K562 (cell line): ENCODE measurements at regions of chr4 and their contacts with region 1.

Region 1: GRCh38 chr4:40238700-40239548 is 42.1 kb downstream of the RHOH start:
- DNase-seq: peak; percentile 92 to 97 (median 95)
- ATAC-seq: peak; percentile 99
- H3K4me3 ChIP-seq: peak overlapping the region; percentile 37
- H3K27ac ChIP-seq: peak overlapping the region; percentile 99
- H3K4me1 ChIP-seq: peaks cover 27 to 48% of the 10 kb centered on the region in 2 experiments
- H3K27me3 ChIP-seq: no peaks in the 10 kb centered on the region
- CTCF ChIP-seq: no peak
- EP300 ChIP-seq: peak; percentile 86
- POLR2A ChIP-seq: peak; percentile 79
- RAD21 ChIP-seq: no peak; a peak in 1 of 4 replicates

Region 2: GRCh38 chr4:39998659-39999345 is 240.1 kb before region 1 on chr4:
- CTCF ChIA-PET with region 1: no interaction called
- POLR2A ChIA-PET with region 1: no interaction called
- in situ Hi-C with region 1: no loop called
- intact Hi-C with region 1: no loop called
- DNase-seq: no peak
- ATAC-seq: no peak
- H3K4me3 ChIP-seq: no peak overlapping the region
- H3K27ac ChIP-seq: no peak overlapping the region
- H3K4me1 ChIP-seq: peaks cover 0 to under 1% of the 10 kb centered on the region in 2 experiments; a peak in 1 of 5 replicates
- H3K27me3 ChIP-seq: no peaks in the 10 kb centered on the region
- CTCF ChIP-seq: no peak
- EP300 ChIP-seq: no peak
- POLR2A ChIP-seq: no peak
- RAD21 ChIP-seq: no peak

Region 3: DNA sequence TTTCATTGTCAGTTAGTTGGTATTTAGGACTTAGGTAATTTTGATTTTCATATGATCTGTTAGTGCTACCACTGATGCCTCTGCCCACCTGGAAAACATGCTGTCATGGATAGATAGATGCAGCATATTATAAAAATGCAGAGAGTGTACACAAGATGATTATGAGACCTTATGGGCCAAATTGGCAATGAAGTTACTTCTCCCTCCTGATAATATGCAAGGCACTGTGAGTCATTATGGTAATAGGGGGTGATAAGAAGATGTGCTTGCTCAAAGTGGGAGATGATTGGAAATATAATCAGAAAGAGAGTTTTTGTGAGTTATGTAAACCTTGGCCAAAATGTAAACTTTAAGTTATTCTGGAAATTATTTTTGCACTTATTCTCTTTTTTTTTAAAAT is 98.7 kb before region 1 on chr4:
- CTCF ChIA-PET with region 1: no interaction called
- POLR2A ChIA-PET with region 1: no interaction called
- in situ Hi-C with region 1: no loop called
- intact Hi-C with region 1: no loop called
- DNase-seq: peak in 2 of 4 experiments; percentile 33 to 41
- ATAC-seq: peak; percentile 59
- H3K4me3 ChIP-seq: no peak overlapping the region
- H3K27ac ChIP-seq: no peak overlapping the region; the same call in 2 of the 3 replicates
- H3K4me1 ChIP-seq: peaks cover 0 to 5% of the 10 kb centered on the region in 2 experiments; a peak in 2 of 5 replicates
- H3K27me3 ChIP-seq: no peaks in the 10 kb centered on the region
- CTCF ChIP-seq: no peak
- EP300 ChIP-seq: no peak; the same call in 1 of the 2 replicates
- POLR2A ChIP-seq: no peak
- RAD21 ChIP-seq: no peak

Region 4: DNA sequence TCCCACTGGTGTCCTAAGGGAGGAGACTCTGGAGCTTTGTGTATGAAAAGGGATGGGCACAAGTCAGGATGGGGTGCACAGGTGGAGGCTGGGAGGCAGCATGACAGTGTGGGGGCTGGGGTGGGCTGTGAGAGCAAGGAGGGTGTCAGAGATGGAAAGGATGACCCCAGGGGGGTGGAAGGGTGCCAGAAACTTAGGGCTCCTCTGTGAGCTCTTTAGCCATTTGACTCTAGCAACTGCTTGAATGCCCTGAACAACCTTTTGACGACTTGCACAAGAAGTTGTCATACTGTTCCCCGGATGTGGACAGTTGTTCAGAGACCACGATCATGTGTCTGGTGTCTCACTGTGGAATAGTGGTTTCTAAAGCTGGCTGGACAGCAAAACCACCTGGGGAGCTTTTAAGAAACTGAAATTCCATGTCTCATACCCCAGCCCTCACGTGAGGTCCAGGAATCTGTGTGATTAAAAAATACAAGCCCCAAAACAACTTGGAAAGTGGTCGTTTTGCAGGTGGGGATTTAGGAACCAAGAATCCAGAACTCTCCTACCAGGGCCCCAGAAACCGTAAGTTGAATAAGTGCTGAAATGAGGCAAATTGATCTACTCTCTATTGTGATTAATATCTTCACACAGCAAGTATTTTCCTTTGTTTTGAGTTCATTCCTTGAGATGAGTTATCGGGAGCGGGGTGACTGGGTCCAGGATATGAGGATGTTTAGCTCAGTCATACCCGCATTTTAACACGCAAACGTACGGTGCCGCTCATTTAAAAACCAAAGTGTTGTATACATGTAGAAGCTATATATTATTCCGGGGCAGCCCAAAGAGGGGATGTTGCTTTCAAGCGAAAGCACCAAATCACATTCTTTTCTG is 38.7 kb before region 1 on chr4:
- CTCF ChIA-PET with region 1: no interaction called
- POLR2A ChIA-PET with region 1: interaction called, 4 read pairs
- in situ Hi-C with region 1: no loop called
- intact Hi-C with region 1: loop called (anchors 2 kb)
- DNase-seq: peak in 1 of 4 experiments; percentile 83
- ATAC-seq: peak; percentile 33
- H3K4me3 ChIP-seq: peak overlapping the region; percentile 50
- H3K27ac ChIP-seq: peak overlapping the region; percentile 85
- H3K4me1 ChIP-seq: peaks cover 34 to 48% of the 10 kb centered on the region in 2 experiments; a peak in 4 of 5 replicates
- H3K27me3 ChIP-seq: no peaks in the 10 kb centered on the region
- CTCF ChIP-seq: no peak
- EP300 ChIP-seq: 0 out of 2 replicates have a peak, but pooled peaks have one; percentile 4
- POLR2A ChIP-seq: no peak; the same call in 1 of the 2 replicates
- RAD21 ChIP-seq: 0 out of 4 replicates have a peak, but pooled peaks of 1 of the 2 experiments have one; percentile 9

Region 5: DNA sequence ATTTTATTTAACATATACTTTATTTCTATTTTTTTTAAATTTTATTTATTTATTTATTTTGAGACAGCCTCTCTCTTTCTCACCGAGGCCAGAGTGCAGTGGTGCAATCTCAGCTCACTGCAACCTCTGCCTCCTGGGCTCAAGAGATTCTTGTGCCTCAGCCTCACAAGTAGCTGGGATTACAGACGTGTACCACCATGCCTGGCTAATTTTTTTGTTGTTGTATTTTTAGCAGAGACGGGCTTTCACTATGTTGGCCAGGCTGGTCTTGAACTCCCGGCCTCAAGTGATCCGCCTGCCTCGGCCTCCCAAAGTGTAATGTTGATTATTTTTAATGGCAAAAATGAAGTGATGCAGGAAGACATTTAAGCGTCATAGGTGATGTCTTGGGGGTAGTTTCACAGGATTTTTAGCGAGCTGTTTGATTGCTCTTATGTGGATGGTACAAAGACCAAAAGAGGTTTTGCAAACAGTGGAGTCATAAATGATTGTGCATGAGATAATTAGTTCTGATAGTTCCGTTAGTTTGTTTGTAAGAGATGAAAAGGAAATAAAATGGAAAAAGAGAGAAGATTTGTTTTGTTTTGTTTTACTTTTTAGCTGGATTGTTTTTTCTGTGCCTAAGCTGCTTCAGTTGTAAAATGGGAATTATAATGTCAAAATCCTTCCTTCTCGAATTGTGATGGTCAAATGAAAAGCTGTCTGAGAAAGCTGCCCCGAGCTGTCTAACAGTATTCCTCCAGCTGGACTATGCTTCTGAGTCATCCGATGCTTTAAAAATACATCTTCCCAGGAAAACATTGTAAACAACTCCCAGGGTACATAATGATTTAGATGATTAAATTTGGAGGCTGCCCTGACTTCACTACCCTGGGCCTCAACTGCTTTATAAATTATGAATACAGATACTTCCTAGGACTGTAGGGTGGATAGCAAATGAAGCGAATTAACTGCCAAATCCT is 27.4 kb before region 1 on chr4:
- CTCF ChIA-PET with region 1: no interaction called
- POLR2A ChIA-PET with region 1: interaction called, 8 read pairs
- in situ Hi-C with region 1: no loop called
- intact Hi-C with region 1: loop called (anchors 2 kb)
- DNase-seq: no peak
- ATAC-seq: no peak
- H3K4me3 ChIP-seq: no peak overlapping the region
- H3K27ac ChIP-seq: peak overlapping the region; percentile 97; the same call in 2 of the 3 replicates
- H3K4me1 ChIP-seq: peaks cover 15 to 28% of the 10 kb centered on the region in 2 experiments; a peak in 4 of 5 replicates
- H3K27me3 ChIP-seq: no peaks in the 10 kb centered on the region
- CTCF ChIP-seq: no peak
- EP300 ChIP-seq: no peak
- POLR2A ChIP-seq: no peak; the same call in 1 of the 2 replicates
- RAD21 ChIP-seq: no peak

Region 6: DNA sequence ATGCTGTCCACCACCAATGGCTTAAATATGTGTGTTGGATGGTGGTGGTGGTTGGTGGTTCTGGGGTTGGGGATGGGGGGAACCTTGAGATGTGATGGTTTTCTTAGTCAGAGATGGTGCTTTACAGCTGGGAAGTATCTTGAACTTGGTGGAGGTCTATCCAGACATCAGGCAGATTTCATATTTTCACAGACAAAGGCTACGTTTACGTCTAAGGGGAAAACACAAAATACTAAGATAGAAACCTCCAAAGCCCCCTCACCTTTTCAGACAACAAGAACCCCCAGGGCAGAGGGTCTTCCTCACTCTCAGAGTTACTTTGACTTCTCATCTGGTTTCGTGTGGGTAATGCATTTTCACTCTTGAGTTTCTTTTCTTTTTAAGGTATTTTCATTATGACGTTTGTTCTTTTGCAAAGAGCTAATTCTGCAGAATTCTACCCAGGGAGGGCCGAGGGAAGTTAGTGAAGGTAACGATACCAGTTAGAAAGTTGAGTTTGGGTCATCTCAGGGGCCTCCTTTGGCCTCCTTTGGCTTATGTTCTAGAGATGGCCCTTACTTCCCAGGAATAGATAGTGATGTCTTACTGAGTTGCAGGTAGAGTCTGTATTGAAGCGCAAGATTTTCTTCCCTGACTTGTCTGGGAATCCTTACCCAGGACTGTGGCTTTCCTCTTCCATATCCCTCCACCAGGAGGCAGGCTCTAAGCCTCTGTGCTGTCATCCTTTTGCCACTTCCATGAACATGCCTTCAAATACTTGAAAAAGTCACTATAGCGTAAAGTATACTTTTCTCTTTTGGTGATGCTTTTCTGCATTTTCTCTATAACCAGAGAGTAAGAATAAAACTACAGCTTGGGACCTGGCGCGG is 10.2 kb before region 1 on chr4:
- CTCF ChIA-PET with region 1: no interaction called
- POLR2A ChIA-PET with region 1: interaction called, 19 read pairs
- in situ Hi-C with region 1: no loop called
- intact Hi-C with region 1: no loop called
- DNase-seq: peak; percentile 39 to 49 (median 48)
- ATAC-seq: peak; percentile 75
- H3K4me3 ChIP-seq: no peak overlapping the region
- H3K27ac ChIP-seq: 0 out of 3 replicates have a peak overlapping the region, but pooled peaks have one; percentile 6
- H3K4me1 ChIP-seq: peaks cover 6 to 8% of the 10 kb centered on the region in 2 experiments; a peak in 4 of 5 replicates
- H3K27me3 ChIP-seq: no peaks in the 10 kb centered on the region
- CTCF ChIP-seq: peak; percentile 57 to 71 (median 61)
- EP300 ChIP-seq: no peak
- POLR2A ChIP-seq: no peak
- RAD21 ChIP-seq: peak; percentile 62 to 75

Region 7: DNA sequence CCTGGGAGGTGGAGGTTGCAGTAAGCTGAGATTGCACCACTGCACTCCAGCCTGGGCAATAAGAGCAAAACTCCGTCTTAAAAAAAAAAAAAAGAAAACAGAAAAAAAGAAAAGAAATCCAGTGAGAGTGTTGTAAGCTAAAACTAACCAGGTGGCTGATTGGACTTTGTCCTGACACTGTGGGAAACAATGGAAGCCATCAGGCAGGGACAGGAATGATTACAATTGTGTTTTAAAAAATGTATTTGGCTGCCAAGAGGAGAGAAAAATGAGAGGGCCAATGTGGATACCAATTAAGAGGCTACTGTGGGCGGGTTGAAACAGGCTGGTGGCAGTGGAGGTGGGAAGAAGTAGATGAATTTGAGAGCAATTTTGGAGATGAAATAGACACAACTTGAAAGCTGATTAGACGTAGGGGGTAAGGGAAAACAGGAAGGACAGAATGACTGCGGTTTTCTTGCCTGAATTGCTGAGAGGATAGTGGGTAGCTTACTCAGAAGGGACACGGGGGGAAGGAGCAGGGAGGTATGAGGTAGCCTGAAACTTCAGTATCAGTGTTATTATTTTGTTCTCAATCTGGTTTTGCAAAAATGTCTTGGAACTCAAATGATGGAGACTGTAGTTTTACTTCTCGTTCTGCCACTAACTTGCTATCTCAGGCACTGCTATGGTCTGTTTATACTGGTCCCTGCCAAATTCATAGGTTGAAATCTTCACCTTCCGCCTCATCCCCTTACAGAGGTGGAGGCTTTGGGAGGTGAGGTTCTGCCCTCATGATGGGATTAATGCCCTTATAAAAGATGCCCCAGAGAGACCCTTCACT is 50.7 kb after region 1 on chr4:
- CTCF ChIA-PET with region 1: no interaction called
- POLR2A ChIA-PET with region 1: interaction called, 5 read pairs
- in situ Hi-C with region 1: no loop called
- intact Hi-C with region 1: loop called (anchors 2 kb)
- DNase-seq: peak in 2 of 4 experiments; percentile 54 to 65
- ATAC-seq: peak; percentile 65
- H3K4me3 ChIP-seq: no peak overlapping the region
- H3K27ac ChIP-seq: peak overlapping the region; percentile 56; the same call in 2 of the 3 replicates
- H3K4me1 ChIP-seq: peaks cover 11 to 36% of the 10 kb centered on the region in 2 experiments
- H3K27me3 ChIP-seq: no peaks in the 10 kb centered on the region
- CTCF ChIP-seq: no peak
- EP300 ChIP-seq: peak; percentile 39; the same call in 1 of the 2 replicates
- POLR2A ChIP-seq: no peak
- RAD21 ChIP-seq: no peak